Naive thymus-derived CD4-positive, alpha-beta T cell (primary cell): ENCODE measurements at regions of chr16 and their contacts with region 1.

Region 1: DNA sequence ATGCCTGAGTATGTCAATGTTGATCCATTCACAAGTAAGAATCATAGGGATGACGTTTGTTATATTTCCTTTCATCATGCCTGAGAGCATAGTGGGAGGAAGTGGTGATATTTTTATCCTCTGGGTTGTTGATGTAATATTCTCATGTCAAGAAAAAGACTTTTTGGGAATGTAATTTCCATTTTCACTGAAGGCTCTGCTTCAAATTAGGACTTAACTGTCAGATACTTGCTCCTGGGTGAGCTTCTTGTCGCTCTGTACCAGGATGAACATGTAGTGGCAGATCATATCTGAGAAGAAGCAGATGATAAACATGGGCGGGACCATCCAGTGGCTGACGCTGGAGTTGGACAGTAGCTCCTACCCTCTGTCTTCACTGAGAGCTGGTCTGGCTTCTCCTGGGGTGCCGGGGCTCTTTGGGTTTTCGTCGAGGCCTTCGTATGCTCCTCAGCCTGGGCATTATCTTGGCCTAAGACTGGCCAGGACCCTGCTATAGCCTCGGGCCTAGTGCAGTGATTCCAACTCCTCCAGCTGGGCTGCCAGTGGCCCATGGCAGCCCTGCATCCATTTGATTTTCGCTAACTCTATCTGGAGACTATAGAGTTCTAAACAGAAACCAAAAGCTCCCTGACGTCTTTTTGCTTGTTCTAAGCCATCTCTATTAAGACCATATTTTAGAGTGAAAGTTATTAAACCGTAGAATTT is 19.7 kb downstream of the CYB5B start:
- DNase-seq: peak in 7 of 9 donors; percentile 1 to 51 (median 35)
- ATAC-seq: peak; percentile 85
- H3K4me3 ChIP-seq: peak overlapping the region; percentile 45
- H3K4me3 Mint-ChIP-seq: peak overlapping the region; percentile 68 to 90 (median 86)
- H3K27ac ChIP-seq: peak overlapping the region; percentile 64
- H3K27ac Mint-ChIP-seq: peak overlapping the region; percentile 86 to 98 (median 96)
- H3K4me1 ChIP-seq: peaks cover 10 to 26% of the 10 kb centered on the region in 2 donors
- H3K4me1 Mint-ChIP-seq: peaks cover 16 to 51% (median 41%) of the 10 kb centered on the region in 7 donors
- H3K27me3 ChIP-seq: no peaks in the 10 kb centered on the region
- H3K27me3 Mint-ChIP-seq: no peaks in the 10 kb centered on the region

Region 2: DNA sequence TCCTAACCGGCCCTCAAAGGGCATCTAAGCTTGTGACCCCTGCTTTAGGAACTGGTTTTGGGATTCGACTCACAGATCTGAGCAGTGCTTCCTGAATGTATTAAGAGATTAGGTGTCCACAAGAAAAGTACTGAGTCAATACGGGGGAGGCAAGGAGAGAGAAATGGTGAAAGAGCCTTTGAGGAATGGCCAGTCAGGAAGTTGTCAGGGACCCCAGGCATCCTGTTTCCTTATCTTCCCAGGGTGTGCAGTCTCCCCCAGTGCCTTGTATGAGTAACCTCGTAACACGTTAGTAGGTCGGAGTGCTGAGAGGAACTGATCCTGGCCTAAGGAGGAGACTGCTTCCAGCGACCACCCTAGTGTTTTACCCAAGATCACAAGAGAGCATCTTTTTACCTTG is 76.1 kb before region 1 on chr16:
- CTCF ChIA-PET with region 1: no interaction called
- POLR2A ChIA-PET with region 1: no interaction called
- intact Hi-C with region 1: no loop called
- DNase-seq: no peak
- ATAC-seq: no peak
- H3K4me3 ChIP-seq: no peak overlapping the region
- H3K4me3 Mint-ChIP-seq: no peak overlapping the region
- H3K27ac ChIP-seq: no peak overlapping the region
- H3K27ac Mint-ChIP-seq: peak overlapping the region in 2 of 9 donors; percentile 38 to 55
- H3K4me1 ChIP-seq: no peaks in the 10 kb centered on the region
- H3K4me1 Mint-ChIP-seq: peaks cover 3 to 25% (median 16%) of the 10 kb centered on the region in 7 donors
- H3K27me3 ChIP-seq: no peaks in the 10 kb centered on the region
- H3K27me3 Mint-ChIP-seq: no peaks in the 10 kb centered on the region

Region 3: DNA sequence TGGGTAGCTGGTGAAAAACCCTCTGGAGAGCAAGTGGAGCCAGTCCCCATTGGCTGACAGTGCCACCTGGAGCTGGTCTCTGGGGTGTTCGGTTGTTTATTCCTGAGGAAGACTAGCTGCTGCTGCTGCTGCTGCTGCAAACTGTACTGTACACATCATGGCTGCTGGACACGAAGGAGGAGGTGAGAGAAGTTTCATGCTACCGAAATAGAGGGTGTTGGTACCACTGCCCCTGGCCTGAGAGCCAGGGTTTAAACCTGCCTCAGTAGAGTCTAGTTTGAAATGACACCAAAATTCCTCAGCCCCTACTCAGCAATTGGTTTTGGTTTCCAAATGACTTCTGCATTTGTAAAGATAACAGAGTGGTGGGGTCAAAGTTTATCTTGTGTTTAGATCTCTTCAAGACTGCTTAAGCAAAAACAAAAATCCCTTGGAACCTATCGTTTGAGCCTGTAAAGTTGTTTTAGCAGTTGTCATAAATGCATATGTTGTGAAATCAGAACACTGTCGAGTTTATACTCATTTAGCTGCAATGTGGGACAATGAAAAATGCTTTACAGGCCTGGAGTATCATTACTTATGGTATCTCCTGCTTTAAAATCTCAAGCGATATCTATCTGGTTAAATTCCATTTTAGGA is 21.1 kb after region 1 on chr16:
- CTCF ChIA-PET with region 1: no interaction called
- POLR2A ChIA-PET with region 1: no interaction called
- intact Hi-C with region 1: loop called in 1 of 2 experiments (anchors 1 kb)
- DNase-seq: peak in 1 of 9 donors; percentile 8
- ATAC-seq: peak; percentile 46
- H3K4me3 ChIP-seq: no peak overlapping the region
- H3K4me3 Mint-ChIP-seq: peak overlapping the region in 1 of 10 donors; percentile 77
- H3K27ac ChIP-seq: no peak overlapping the region
- H3K27ac Mint-ChIP-seq: peak overlapping the region; percentile 43 to 90 (median 59)
- H3K4me1 ChIP-seq: peaks cover 0 to 3% of the 10 kb centered on the region in 2 donors
- H3K4me1 Mint-ChIP-seq: peaks cover 5 to 58% (median 28%) of the 10 kb centered on the region in 7 donors
- H3K27me3 ChIP-seq: no peaks in the 10 kb centered on the region
- H3K27me3 Mint-ChIP-seq: no peaks in the 10 kb centered on the region

Region 4: DNA sequence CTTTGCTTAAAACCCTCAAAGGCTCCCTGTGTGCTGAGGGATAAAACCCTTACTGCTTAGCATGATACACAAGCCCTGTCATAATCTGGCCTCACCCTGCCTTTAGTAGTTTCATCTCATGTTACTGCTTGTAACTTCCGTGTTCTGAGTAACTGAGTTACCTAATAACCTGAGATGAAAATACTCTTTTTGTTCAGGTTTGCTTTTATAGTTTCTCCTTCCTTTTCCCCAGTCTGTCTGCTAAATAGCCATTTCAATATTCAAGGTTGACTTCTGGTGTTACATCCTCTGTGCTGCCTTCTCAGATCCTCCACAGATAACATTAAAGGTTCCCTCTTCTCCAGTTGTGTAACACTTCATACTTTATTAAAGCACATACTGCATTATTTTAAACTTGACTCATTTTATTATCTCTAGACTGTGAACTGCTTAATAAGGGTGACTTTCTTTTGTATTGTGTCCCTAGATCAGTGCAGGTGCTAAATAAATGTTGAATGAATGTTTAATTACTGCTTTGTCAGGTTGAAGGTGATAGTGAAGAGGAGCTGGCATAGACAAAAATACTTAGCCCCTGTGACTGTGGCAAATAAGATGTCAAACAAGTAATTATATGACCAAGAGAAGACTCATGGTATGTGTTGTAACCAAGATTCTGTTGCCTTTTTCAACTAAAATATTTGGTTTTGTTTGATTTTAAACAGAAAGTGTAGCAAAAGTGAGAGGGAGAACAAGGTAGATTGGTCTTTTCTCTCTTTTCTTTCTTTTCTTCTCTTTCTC is 169.5 kb after region 1 on chr16:
- CTCF ChIA-PET with region 1: no interaction called
- POLR2A ChIA-PET with region 1: no interaction called
- intact Hi-C with region 1: no loop called
- DNase-seq: peak in 2 of 9 donors; percentile 1 to 2
- ATAC-seq: peak; percentile 60
- H3K4me3 ChIP-seq: no peak overlapping the region
- H3K4me3 Mint-ChIP-seq: peak overlapping the region in 2 of 10 donors; percentile 1 to 5
- H3K27ac ChIP-seq: no peak overlapping the region
- H3K27ac Mint-ChIP-seq: peak overlapping the region; percentile 2 to 67 (median 40)
- H3K4me1 ChIP-seq: peaks cover 8 to 11% of the 10 kb centered on the region in 2 donors
- H3K4me1 Mint-ChIP-seq: peaks cover 22 to 72% (median 67%) of the 10 kb centered on the region in 7 donors
- H3K27me3 ChIP-seq: no peaks in the 10 kb centered on the region
- H3K27me3 Mint-ChIP-seq: no peaks in the 10 kb centered on the region